ENCODE measurements at regions of chr20 and their contacts with region 1.

Region 1: DNA sequence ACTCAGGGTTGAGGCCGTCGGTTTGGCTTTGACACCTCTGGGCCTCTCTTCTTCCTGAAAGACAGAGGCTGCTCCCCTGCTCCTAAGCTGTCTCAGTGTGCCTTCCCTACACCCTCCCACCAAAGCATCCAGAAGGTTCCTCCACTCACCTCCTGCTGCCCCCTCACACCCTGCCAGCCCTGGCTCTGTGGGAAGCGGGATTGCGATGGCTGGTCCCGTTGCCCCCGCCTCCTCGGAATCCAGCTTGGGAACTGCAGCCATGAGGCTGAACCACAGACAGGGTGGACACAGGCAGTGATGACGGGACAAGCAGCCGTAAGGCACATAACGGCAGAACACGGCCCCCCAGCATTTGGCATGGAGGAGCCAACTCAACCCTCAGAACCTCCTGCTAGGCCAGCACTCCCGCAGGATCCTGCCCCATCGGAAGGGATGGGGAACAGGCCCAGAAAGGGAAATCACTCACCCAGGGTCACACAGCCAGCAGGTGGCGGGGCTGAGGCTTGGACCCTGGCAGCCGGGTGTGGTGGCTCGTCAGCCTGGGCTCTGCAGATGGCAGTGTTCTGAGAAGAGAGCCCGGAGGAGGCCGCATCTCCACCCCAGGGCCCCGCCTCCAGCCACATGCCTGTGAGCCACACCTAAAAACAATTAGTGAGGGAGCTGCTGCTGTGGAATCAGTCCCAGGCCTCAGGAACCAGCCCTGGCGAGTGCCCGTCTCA is 139.6 kb downstream of the PHACTR3 start:
- DNase-seq: no peak
- H3K4me3 ChIP-seq: no peak overlapping the region
- H3K27ac ChIP-seq: no peak overlapping the region
- H3K4me1 ChIP-seq: peaks cover 0 to under 1% (median 0%) of the 10 kb centered on the region in 4 donors
- H3K27me3 ChIP-seq: no peaks in the 10 kb centered on the region
- CTCF ChIP-seq: no peak
- EP300 ChIP-seq: no peak
- POLR2A ChIP-seq: no peak

Region 2: DNA sequence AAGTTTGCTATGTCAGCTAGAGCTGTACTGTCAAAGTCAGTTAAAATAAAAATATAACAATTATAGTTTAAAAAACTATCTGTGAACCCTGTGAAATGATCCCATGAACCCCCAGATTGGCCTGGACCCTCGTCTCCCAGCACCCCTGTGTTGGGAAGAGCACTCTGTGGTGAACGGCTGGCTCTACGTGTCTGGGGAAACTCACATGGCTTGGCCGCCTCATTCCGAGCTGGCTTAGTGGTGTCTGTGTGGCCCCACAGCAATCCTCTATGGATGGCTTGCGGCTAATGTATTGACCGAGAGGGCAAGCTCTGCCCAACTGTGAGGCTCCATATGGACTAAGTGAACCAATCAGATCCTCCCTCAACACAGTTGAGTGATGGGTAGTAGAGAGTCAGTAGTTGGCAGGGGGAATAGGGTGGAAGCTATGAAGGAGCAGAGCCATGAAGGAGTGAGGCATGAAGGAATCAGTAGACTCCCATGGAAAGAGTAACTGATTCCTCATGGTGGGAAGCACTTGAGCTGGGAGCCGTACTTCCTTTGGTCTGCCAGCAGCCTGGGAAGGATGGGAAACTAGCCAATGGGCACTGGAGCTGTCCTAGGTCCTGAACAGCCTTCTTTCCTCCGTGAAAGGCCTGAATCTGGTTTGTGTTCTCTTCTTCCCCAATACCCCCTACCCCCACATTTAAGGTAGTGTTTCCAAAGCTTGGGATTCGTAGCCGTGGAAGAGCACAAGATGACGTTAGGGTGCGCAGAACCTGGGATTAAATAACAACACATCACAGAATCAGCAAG is 601.9 kb before region 1 on chr20:
- in situ Hi-C with region 1: no loop called
- intact Hi-C with region 1: no loop called
- DNase-seq: no peak
- H3K4me3 ChIP-seq: no peak overlapping the region
- H3K27ac ChIP-seq: no peak overlapping the region
- H3K4me1 ChIP-seq: peaks cover 0 to 20% (median 8%) of the 10 kb centered on the region in 4 donors
- H3K27me3 ChIP-seq: no peaks in the 10 kb centered on the region
- CTCF ChIP-seq: no peak
- EP300 ChIP-seq: no peak
- POLR2A ChIP-seq: no peak

Region 3: DNA sequence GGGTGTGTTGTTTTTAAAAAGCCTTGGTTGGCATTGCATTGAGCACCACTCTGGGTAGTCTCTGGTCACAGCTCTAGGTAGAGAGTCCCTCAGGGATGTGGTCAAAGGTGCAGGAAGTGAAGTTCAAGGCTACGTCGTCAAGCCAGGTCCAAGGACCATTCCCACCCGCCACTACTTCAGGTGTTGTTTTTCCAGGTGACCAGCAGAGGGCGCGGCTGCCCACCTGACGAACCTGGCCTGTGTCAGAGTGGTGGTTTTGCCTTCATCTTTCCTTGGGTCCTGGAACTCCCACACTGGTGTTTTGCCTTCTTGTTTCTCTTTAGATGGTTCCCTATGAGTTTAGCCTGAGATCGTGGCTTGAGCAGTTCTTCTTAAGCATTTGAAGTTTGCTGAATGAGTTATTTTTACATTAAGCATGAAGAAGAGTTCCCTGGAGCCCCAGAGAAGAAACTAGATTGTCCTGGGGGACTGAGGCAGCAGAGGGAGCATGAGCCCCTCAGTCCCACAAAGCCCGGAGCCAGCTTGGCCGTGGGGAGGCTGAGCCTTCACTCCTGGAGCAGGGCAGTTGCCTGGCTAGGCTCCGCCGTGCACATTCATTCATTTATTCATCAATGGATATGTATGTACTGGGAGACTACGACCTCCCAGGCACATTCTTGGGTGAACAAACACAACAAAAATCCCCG is 145.2 kb before region 1 on chr20:
- in situ Hi-C with region 1: loop called in 1 of 4 experiments (anchors 10 kb)
- intact Hi-C with region 1: no loop called
- DNase-seq: peak; percentile 23
- H3K4me3 ChIP-seq: no peak overlapping the region
- H3K27ac ChIP-seq: no peak overlapping the region
- H3K4me1 ChIP-seq: no peaks in the 10 kb centered on the region
- H3K27me3 ChIP-seq: peaks cover 36% of the 10 kb centered on the region
- CTCF ChIP-seq: peak; percentile 50 to 74 (median 67)
- EP300 ChIP-seq: no peak
- POLR2A ChIP-seq: no peak

Region 4: GRCh38 chr20:59611269-59611668 is 132.7 kb before region 1 on chr20:
- in situ Hi-C with region 1: no loop called
- intact Hi-C with region 1: loop called (anchors 10 kb)
- DNase-seq: no peak
- H3K4me3 ChIP-seq: no peak overlapping the region
- H3K27ac ChIP-seq: no peak overlapping the region
- H3K4me1 ChIP-seq: no peaks in the 10 kb centered on the region
- H3K27me3 ChIP-seq: peaks cover 28% of the 10 kb centered on the region
- CTCF ChIP-seq: no peak
- EP300 ChIP-seq: no peak
- POLR2A ChIP-seq: no peak

Region 5: DNA sequence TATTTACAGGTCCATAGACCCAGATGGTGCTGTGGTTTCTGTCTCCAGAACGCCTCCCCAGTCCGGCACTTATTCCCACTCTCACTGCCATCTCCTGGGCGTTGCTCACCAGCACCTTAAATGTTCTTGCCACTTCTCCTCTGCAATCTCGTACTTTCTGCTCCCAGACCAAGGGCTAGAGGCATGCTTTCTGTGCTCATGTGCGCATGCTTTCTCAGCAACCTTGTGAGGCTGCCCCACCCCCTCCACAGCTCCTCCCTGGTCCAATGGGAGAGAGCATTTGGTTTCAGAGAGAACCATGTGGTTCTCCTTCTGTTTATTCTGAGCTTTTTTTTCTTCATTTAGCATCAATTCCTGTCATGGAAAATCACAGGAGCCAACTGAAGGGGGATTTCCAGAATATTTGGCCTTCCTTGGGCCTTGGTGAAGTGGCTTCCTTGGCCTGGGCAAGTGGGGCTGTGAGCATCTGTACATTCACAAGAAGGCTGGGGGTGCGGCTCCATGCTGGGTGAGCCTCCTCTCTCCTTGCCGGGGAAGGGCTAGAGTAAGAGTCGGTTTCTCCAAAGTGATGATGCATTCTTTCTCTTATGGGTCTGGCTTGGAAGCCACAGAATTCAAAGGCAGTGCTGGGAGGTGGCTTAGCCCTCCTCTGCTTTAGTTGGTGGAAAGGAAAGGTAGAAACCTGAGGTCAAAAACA is 73.0 kb before region 1 on chr20:
- in situ Hi-C with region 1: no loop called
- intact Hi-C with region 1: no loop called
- DNase-seq: no peak
- H3K4me3 ChIP-seq: no peak overlapping the region
- H3K27ac ChIP-seq: no peak overlapping the region
- H3K4me1 ChIP-seq: no peaks in the 10 kb centered on the region
- H3K27me3 ChIP-seq: no peaks in the 10 kb centered on the region
- CTCF ChIP-seq: no peak
- EP300 ChIP-seq: no peak
- POLR2A ChIP-seq: no peak

Region 6: DNA sequence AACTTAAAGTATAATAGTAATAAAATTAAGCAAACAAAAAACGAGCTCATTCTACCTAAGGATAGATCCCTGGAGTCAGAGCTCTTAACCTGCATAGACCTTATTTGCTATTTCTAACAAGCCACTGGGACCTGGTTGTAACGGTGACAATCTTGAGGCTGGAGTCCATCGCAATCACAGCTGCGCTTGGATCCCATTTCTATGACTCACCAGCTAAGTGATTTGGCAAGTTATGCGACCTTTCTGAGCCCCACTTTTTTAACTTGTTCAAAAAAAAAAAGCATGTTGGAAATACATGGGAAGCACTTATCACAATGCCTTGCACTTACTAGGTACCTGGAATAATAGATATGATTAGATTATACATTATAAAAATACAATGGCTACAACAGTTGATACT is 1118.7 kb after region 1 on chr20:
- in situ Hi-C with region 1: no loop called
- intact Hi-C with region 1: no loop called
- DNase-seq: no peak
- H3K4me3 ChIP-seq: no peak overlapping the region
- H3K27ac ChIP-seq: no peak overlapping the region
- H3K4me1 ChIP-seq: no peaks in the 10 kb centered on the region
- H3K27me3 ChIP-seq: no peaks in the 10 kb centered on the region
- CTCF ChIP-seq: no peak
- EP300 ChIP-seq: no peak
- POLR2A ChIP-seq: no peak

Region 7: GRCh38 chr20:61328911-61329558 is 1585.1 kb after region 1 on chr20:
- in situ Hi-C with region 1: no loop called
- intact Hi-C with region 1: no loop called
- DNase-seq: no peak
- H3K4me3 ChIP-seq: no peak overlapping the region
- H3K27ac ChIP-seq: no peak overlapping the region
- H3K4me1 ChIP-seq: no peaks in the 10 kb centered on the region
- H3K27me3 ChIP-seq: peaks cover 7% of the 10 kb centered on the region
- CTCF ChIP-seq: no peak
- EP300 ChIP-seq: no peak
- POLR2A ChIP-seq: no peak

Measured in transverse colon (tissue), 4 donors.